Esophagus muscularis mucosa (tissue), 4 donors: ENCODE measurements at regions of chr17 and their contacts with region 1.

Region 1: DNA sequence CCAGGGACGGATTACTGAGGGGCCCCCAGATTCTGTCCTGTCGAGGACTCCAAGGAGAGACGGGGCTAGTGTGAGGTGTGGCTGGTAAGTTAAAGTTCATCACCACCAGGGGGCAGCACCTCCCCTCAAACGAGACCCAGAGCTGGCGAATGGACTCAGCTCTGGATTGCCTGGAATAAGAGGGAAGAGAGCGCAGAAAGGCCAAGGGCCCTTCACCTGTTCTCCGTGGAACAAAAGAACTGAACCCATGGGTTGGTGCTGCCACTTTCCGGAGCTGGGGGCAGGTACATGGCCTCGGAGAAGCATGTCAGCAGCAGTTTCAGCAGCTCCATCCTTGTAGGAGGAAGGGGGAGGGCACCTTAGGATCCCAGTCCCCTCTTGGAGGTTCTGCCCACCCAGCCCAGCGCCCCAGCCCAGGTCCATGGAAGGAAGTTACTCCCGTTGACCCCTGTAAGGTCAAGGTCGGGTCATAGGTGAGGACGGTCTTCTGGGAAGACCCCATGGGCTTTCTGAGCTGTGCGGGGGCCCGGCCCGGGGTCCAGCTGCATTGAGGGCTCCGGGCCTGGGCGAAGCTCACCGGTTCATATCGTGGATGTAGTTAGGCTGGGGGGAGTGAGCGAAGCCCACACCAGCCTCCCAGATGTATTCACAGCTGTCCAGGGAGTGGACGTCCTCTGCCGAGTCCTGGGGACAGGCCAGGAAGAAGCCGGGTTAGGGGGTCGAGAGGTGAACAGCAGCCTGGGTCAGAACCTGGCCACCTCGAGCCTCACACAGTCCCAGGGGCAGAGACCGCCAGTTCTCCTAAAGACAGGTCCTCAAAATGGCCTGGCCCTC is 10.7 kb downstream of the HID1 start:
- DNase-seq: peak; percentile 97
- H3K4me3 ChIP-seq: no peak overlapping the region
- H3K27ac ChIP-seq: peak overlapping the region in 1 of 4 donors; percentile 14
- H3K4me1 ChIP-seq: peaks cover 0 to 8% (median 4%) of the 10 kb centered on the region in 4 donors
- H3K27me3 ChIP-seq: peaks cover 0 to 7% (median 0%) of the 10 kb centered on the region in 4 donors
- CTCF ChIP-seq: peak; percentile 75 to 80 (median 79)
- EP300 ChIP-seq: no peak
- POLR2A ChIP-seq: no peak

Region 2: DNA sequence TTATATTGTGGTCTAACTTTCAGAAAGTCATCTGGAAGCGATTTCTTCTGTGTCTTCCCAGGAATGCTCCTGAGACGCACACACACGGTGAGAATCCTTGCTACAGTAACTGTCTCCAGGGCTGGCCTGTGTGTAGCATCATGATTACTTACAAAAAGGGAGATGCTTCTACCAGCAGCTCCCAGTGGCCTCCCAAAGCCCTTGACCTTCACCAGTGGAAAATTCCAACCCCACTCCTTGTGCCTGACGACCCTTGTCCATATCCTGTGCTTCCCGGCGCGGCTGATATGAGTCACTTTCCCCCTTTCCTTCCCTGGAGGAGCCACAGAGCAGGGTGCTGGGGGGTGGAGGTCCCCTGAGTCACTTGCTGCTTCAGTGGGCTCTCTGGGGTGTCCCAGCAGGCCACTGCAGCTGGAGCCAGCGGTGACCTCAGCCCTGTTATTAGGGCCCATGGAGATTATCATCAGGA is 163.6 kb before region 1 on chr17:
- intact Hi-C with region 1: loop called (anchors 10 kb)
- DNase-seq: no peak
- H3K4me3 ChIP-seq: no peak overlapping the region
- H3K27ac ChIP-seq: no peak overlapping the region
- H3K4me1 ChIP-seq: no peaks in the 10 kb centered on the region
- H3K27me3 ChIP-seq: no peaks in the 10 kb centered on the region
- CTCF ChIP-seq: no peak
- EP300 ChIP-seq: no peak
- POLR2A ChIP-seq: no peak

Region 3: DNA sequence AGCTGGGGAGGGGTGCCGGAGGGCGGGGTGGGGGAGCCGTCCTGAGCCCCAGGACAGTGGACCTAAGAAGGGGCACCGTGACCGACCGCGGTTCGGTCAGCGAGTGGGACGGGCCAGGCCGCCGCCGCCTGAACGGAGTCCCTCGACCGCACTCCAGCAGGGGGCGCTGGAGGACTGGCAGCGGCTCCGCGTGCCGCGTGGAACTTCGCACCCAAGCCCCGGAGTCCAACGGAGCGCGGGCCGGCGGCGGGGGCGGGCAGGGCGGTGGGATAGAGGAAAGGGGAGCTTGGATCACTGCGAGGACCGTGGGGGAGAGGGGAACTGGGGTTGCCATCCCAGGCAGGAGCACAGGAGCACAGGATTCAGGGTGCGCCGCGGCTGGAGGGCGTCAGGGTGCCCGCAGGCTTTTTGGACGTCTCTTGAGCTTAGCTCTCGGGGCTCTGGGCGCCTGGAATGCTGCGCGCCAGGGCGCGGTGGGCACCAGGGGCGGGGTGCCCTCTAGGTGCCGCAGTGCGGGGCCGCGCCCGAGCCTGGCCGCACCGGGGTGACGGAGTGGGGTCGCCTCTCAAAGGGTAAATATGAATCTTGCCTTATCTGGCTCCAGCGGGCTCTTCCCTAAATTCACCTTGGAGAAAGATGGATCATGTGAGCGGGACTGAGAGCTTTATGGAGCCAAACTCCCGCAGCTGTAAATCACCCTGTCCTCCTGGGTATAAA is 38.2 kb before region 1 on chr17:
- intact Hi-C with region 1: loop called (anchors 5 kb)
- DNase-seq: no peak
- H3K4me3 ChIP-seq: peak overlapping the region; percentile 38 to 53 (median 42)
- H3K27ac ChIP-seq: no peak overlapping the region
- H3K4me1 ChIP-seq: peaks cover 21 to 38% (median 27%) of the 10 kb centered on the region in 4 donors
- H3K27me3 ChIP-seq: peaks cover 7 to 96% (median 38%) of the 10 kb centered on the region in 4 donors
- CTCF ChIP-seq: peak; percentile 49 to 87 (median 69)
- EP300 ChIP-seq: no peak
- POLR2A ChIP-seq: no peak

Region 4: DNA sequence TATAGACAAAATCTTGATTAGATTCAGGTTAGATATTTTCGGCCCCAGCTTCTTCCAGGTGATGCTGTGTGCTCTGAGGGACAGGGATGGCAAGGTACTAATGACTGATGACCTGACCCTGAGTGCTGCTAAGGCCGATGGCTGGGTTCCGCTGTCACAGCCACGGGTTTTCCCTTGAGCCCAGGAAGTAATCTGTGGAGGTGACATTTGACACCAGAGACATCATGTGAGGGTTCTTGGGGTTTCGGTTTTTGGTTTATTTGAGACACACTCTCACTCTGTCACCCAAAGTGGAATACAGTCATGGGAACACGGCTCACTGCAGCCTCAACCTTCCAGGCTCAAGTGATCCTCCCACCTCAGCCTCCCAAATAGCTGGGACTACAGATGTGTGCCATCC is 16.3 kb before region 1 on chr17:
- intact Hi-C with region 1: no loop called
- DNase-seq: no peak
- H3K4me3 ChIP-seq: no peak overlapping the region
- H3K27ac ChIP-seq: no peak overlapping the region
- H3K4me1 ChIP-seq: no peaks in the 10 kb centered on the region
- H3K27me3 ChIP-seq: peaks cover 0 to 78% (median 6%) of the 10 kb centered on the region in 4 donors
- CTCF ChIP-seq: no peak
- EP300 ChIP-seq: no peak
- POLR2A ChIP-seq: no peak

Region 5: DNA sequence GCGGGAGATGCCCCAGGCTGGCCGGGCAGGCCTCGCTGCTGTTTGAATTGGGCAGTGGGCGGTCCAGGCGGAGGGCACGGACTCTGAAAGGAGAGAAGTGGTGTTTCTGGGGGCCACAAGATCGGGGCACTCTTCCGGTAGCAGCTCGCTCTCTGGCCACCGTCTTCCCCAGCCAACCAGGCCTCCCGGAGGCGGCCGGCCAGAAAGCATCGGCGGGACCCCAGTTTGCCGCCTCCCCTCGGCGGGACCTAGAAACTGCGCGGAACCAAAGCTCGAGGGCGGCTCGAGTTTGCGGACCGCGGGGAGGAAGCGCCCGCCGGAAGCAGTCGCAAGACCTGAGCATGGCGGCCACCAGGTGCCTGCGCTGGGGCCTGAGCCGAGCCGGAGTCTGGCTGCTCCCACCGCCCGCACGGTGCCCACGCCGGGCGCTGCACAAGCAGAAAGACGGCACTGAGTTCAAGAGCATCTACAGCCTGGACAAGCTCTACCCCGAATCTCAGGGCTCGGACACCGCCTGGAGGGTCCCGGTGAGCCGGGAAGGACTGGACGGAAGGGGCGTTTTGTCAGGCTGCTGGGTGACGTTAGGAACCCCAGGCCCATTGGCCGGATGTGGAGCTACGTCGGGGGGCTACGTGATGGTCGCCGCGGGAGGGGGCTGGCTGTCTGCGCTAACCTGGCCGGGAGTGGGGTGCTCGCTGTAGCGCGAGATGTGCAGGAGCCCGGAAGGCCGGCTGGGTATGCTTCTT is 50.6 kb after region 1 on chr17 and contains the start of gene MRPL58:
- intact Hi-C with region 1: loop called (anchors 5 kb)
- DNase-seq: peak; percentile 96
- H3K4me3 ChIP-seq: peak within 1 kb of the TSS; percentile 66 to 93 (median 78)
- H3K27ac ChIP-seq: peak within 1 kb of the TSS; percentile 90 to 95 (median 92)
- H3K4me1 ChIP-seq: peaks cover 18 to 35% (median 30%) of the 10 kb centered on the region in 4 donors
- H3K27me3 ChIP-seq: no peaks in the 10 kb centered on the region
- CTCF ChIP-seq: peak; percentile 28 to 67 (median 43)
- EP300 ChIP-seq: no peak
- POLR2A ChIP-seq: no peak
- total RNA-seq, gene MRPL58: 34.9 to 47.8 (median 40.2) TPM